MCF 10A (cell line): ENCODE measurements at regions of chr9 and their contacts with region 1.

Region 1: GRCh38 chr9:124617471-124618141 is 110.4 kb upstream of the NR5A1 start:
- DNase-seq: peak; percentile 85
- H3K4me3 Mint-ChIP-seq: no peak overlapping the region
- H3K27ac Mint-ChIP-seq: no peak overlapping the region
- H3K4me1 Mint-ChIP-seq: peaks cover 13% of the 10 kb centered on the region
- H3K27me3 Mint-ChIP-seq: no peaks in the 10 kb centered on the region
- CTCF ChIP-seq: peak; percentile 88

Region 2: GRCh38 chr9:124527781-124528180 is 89.8 kb before region 1 on chr9:
- CTCF ChIA-PET with region 1: no interaction called
- POLR2A ChIA-PET with region 1: no interaction called
- intact Hi-C with region 1: no loop called
- DNase-seq: no peak
- H3K4me3 Mint-ChIP-seq: no peak overlapping the region
- H3K27ac Mint-ChIP-seq: no peak overlapping the region
- H3K4me1 Mint-ChIP-seq: no peaks in the 10 kb centered on the region
- H3K27me3 Mint-ChIP-seq: no peaks in the 10 kb centered on the region
- CTCF ChIP-seq: no peak

Region 3: DNA sequence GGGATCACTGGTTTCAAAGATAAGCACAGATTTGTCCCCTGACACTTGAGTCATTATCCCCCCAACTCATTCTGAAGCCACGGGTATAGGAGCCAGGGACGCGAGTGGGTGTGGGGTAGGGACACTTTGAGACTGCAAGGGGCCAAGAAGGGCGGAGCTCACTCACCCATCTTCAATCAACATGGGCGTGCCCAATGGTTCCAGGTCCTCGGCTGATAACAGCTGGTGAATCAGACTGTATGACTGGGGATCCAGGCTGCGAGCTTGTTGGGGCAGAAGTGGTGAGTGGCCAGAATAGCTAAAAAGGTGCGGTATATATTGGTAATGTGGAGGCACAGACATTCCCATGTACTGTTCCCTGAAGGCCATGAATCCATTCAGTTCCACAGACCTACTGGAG is 79.7 kb before region 1 on chr9:
- CTCF ChIA-PET with region 1: interaction called, 11 read pairs
- POLR2A ChIA-PET with region 1: no interaction called
- intact Hi-C with region 1: no loop called
- DNase-seq: no peak
- H3K4me3 Mint-ChIP-seq: no peak overlapping the region
- H3K27ac Mint-ChIP-seq: no peak overlapping the region
- H3K4me1 Mint-ChIP-seq: no peaks in the 10 kb centered on the region
- H3K27me3 Mint-ChIP-seq: no peaks in the 10 kb centered on the region
- CTCF ChIP-seq: no peak

Region 4: DNA sequence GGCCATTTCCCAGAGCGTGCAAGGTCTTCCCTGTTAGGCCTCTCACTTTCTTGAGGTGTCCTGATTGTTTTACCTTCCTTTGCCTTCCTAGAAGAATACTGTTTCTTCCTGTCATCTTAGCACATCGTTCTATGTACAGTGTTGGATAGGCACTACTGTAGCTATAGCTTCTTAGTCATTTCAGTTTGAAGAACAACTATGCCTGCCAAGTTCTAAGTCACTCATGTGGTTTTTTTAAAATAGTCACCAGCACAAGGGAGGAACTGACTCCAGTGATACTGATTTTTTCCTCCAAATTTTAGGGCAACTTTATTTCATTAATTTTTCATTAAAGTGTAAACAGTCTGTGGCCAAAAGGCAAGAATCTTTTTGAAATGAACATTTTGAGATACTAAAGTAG is 12.0 kb after region 1 on chr9:
- CTCF ChIA-PET with region 1: interaction called, 12 read pairs
- POLR2A ChIA-PET with region 1: interaction called, 3 read pairs
- intact Hi-C with region 1: no loop called
- DNase-seq: peak; percentile 35
- H3K4me3 Mint-ChIP-seq: no peak overlapping the region
- H3K27ac Mint-ChIP-seq: no peak overlapping the region
- H3K4me1 Mint-ChIP-seq: peaks cover 10% of the 10 kb centered on the region
- H3K27me3 Mint-ChIP-seq: no peaks in the 10 kb centered on the region
- CTCF ChIP-seq: no peak

Region 5: GRCh38 chr9:124665391-124666058 is 47.9 kb after region 1 on chr9:
- CTCF ChIA-PET with region 1: interaction called, 44 read pairs
- POLR2A ChIA-PET with region 1: interaction called, 4 read pairs
- intact Hi-C with region 1: no loop called
- DNase-seq: peak; percentile 36
- H3K4me3 Mint-ChIP-seq: no peak overlapping the region
- H3K27ac Mint-ChIP-seq: peak overlapping the region; percentile 71
- H3K4me1 Mint-ChIP-seq: peaks cover 6% of the 10 kb centered on the region
- H3K27me3 Mint-ChIP-seq: no peaks in the 10 kb centered on the region
- CTCF ChIP-seq: no peak

Region 6: GRCh38 chr9:124708633-124709291 is 91.2 kb after region 1 on chr9:
- CTCF ChIA-PET with region 1: interaction called, 228 read pairs
- POLR2A ChIA-PET with region 1: interaction called, 9 read pairs
- intact Hi-C with region 1: loop called (anchors 1 kb)
- DNase-seq: no peak
- H3K4me3 Mint-ChIP-seq: no peak overlapping the region
- H3K27ac Mint-ChIP-seq: no peak overlapping the region
- H3K4me1 Mint-ChIP-seq: peaks cover 6% of the 10 kb centered on the region
- H3K27me3 Mint-ChIP-seq: no peaks in the 10 kb centered on the region
- CTCF ChIP-seq: no peak

Region 7: DNA sequence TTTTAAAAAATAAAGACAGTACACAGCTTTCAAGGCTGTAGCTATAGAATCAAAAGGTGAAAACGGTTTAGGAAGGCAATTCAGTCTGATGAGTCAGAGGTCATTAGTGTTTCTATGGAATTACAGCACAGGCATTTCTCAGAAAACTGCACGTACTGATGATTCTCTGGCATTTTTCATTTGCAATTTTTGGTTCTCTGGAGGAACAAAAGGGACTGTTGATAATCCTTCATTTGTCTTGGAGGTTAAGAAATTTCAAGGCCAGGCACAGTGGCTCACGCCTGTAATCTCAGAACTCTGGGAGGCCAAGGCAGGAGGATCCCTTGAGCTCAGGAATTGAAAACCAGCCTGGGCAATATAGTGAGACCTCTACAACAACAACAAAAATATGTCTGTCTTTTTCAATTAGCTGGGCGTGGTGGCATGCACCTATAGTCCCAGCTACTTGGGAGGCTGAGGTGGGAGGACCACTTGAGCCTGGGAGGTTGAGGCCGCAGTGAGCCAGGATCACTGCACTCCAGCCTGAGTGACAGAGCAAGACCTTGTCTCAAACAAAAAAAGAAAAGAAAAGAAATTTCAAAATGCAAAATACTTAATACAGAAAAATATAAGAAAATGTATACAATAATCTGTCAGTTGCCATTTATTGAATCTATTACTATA is 126.2 kb after region 1 on chr9:
- CTCF ChIA-PET with region 1: interaction called, 16 read pairs
- POLR2A ChIA-PET with region 1: no interaction called
- intact Hi-C with region 1: no loop called
- DNase-seq: no peak
- H3K4me3 Mint-ChIP-seq: no peak overlapping the region
- H3K27ac Mint-ChIP-seq: no peak overlapping the region
- H3K4me1 Mint-ChIP-seq: no peaks in the 10 kb centered on the region
- H3K27me3 Mint-ChIP-seq: no peaks in the 10 kb centered on the region
- CTCF ChIP-seq: no peak

Region 8: DNA sequence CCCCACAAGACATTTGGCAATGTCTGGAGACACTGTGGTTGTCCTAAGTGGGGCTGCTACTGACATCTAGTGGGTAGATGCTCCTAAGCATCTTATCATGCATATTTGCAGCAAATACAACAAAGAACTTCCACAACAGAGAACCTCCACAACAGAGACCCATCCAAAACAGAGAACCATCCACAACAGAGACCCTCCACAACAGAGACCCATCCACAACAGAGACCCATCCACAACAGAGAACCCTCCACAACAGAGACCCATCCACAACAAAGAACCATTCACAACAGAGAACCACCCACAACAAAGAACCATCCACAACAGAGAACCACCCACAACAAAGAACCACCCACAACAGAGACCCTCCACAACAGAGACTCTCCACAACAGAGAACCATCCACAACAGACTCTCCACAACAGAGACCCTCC is 277.1 kb after region 1 on chr9:
- CTCF ChIA-PET with region 1: no interaction called
- POLR2A ChIA-PET with region 1: no interaction called
- intact Hi-C with region 1: no loop called
- DNase-seq: peak; percentile 54
- H3K4me3 Mint-ChIP-seq: no peak overlapping the region
- H3K27ac Mint-ChIP-seq: peak overlapping the region; percentile 74
- H3K4me1 Mint-ChIP-seq: peaks cover 5% of the 10 kb centered on the region
- H3K27me3 Mint-ChIP-seq: no peaks in the 10 kb centered on the region
- CTCF ChIP-seq: peak; percentile 47